ENCODE measurements at regions of chr14 and their contacts with region 1.

Region 1: GRCh38 chr14:60266021-60266937 is 17.3 kb downstream of the PPM1A start:
- DNase-seq: peak; percentile 24
- ATAC-seq: peak; percentile 72
- H3K4me3 Mint-ChIP-seq: no peak overlapping the region
- H3K27ac Mint-ChIP-seq: no peak overlapping the region
- H3K4me1 Mint-ChIP-seq: peaks cover 37% of the 10 kb centered on the region
- H3K27me3 Mint-ChIP-seq: no peaks in the 10 kb centered on the region
- CTCF ChIP-seq: peak; percentile 42

Region 2: GRCh38 chr14:60248697-60249318 is 17.5 kb before region 1 on chr14 and contains the start of gene PPM1A:
- CTCF ChIA-PET with region 1: interaction called, 36 read pairs
- POLR2A ChIA-PET with region 1: interaction called, 6 read pairs
- DNase-seq: peak; percentile 94
- ATAC-seq: peak; percentile 67
- H3K4me3 Mint-ChIP-seq: peak within 1 kb of the TSS; percentile 95
- H3K27ac Mint-ChIP-seq: peak within 1 kb of the TSS; percentile 100
- H3K4me1 Mint-ChIP-seq: peaks cover 64% of the 10 kb centered on the region
- H3K27me3 Mint-ChIP-seq: no peaks in the 10 kb centered on the region
- CTCF ChIP-seq: no peak
- total RNA-seq, gene PPM1A: 38.2 to 52.5 TPM (median 41.2 TPM) in 3 replicates

Region 3: DNA sequence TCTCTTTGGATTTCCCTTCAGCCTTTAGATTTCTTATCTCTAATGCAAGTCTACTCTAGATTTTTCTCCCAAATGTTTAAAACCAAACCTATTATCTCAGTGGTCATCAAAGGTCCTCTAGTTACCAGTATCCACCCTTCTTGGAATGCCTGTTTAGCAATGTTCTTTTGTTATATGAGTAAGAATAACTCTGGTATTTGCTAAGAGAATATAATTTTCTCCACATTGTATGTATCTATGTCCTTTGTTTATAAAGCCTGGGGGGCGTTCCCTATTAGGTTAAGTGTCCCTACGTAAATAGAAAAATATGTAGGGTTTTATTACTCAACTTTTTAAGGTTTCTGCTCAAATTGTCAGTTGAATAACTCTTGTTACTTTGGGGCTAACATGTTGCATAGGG is 10.1 kb after region 1 on chr14:
- CTCF ChIA-PET with region 1: interaction called, 19 read pairs
- POLR2A ChIA-PET with region 1: interaction called, 3 read pairs
- DNase-seq: no peak
- ATAC-seq: no peak
- H3K4me3 Mint-ChIP-seq: no peak overlapping the region
- H3K27ac Mint-ChIP-seq: peak overlapping the region; percentile 48
- H3K4me1 Mint-ChIP-seq: peaks cover 88% of the 10 kb centered on the region
- H3K27me3 Mint-ChIP-seq: no peaks in the 10 kb centered on the region
- CTCF ChIP-seq: no peak

Region 4: DNA sequence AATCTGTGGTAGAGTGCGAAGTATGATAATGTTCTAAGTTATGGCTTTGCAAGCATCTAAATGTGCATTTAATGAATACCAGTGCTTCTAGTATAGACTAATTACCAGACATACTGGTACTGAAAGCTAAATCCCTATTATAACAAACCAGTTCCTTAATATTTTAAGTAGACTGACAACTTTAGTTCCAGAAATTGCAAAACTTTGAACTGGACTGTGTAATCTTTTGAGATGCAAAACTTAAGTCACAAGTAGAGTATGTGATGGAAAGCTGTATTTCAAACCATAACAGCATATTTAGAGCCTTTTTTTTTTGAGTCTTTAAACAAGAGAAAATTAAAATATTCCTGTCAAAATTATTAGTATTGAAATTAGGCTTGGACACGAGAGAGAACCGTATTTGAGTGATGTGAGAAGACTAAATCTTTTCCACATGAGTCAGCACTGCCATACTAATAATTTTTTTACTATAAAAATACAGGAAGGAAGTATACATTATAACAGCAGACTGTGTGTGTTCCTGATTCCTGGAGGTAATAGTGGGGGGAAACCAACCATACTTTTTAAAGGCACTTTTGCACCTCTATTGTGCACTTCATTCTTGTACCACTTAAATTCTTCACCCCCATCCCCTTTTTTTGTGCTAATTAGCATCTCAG is 28.3 kb after region 1 on chr14:
- CTCF ChIA-PET with region 1: interaction called, 10 read pairs
- POLR2A ChIA-PET with region 1: no interaction called
- DNase-seq: no peak
- ATAC-seq: no peak
- H3K4me3 Mint-ChIP-seq: no peak overlapping the region
- H3K27ac Mint-ChIP-seq: no peak overlapping the region
- H3K4me1 Mint-ChIP-seq: peaks cover 37% of the 10 kb centered on the region
- H3K27me3 Mint-ChIP-seq: no peaks in the 10 kb centered on the region
- CTCF ChIP-seq: no peak

Region 5: GRCh38 chr14:60323199-60323896 is 57.1 kb after region 1 on chr14:
- CTCF ChIA-PET with region 1: interaction called, 64 read pairs
- POLR2A ChIA-PET with region 1: no interaction called
- DNase-seq: no peak
- ATAC-seq: peak; percentile 59
- H3K4me3 Mint-ChIP-seq: no peak overlapping the region
- H3K27ac Mint-ChIP-seq: no peak overlapping the region
- H3K4me1 Mint-ChIP-seq: peaks cover 49% of the 10 kb centered on the region
- H3K27me3 Mint-ChIP-seq: no peaks in the 10 kb centered on the region; the same call in none of the 2 replicates
- CTCF ChIP-seq: no peak

Region 6: GRCh38 chr14:60349663-60350365 is 83.5 kb after region 1 on chr14:
- CTCF ChIA-PET with region 1: interaction called, 16 read pairs
- POLR2A ChIA-PET with region 1: no interaction called
- DNase-seq: peak; percentile 22
- ATAC-seq: peak; percentile 79
- H3K4me3 Mint-ChIP-seq: peak overlapping the region; percentile 44
- H3K27ac Mint-ChIP-seq: no peak overlapping the region
- H3K4me1 Mint-ChIP-seq: peaks cover 58% of the 10 kb centered on the region
- H3K27me3 Mint-ChIP-seq: no peaks in the 10 kb centered on the region; the same call in 1 of the 2 replicates
- CTCF ChIP-seq: peak; percentile 75

Region 7: DNA sequence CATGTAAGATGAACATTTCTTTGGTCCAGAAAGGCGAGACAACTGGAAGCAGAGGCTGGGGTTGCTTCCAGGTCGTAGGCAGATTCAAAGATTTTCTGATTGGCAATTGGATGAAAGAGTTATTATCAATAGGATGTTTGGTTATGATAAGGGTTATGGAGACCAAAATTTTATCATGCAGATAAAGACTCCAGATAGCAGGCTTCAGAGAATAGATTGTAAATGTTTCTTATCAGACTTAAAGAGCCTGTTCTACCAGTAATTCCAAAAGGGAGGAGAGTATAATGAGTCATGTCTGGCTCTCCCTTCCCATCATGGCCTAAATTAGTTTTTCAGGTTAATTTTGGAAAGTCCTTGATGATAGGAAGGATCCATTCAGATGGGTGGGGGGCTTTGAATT is 164.0 kb after region 1 on chr14:
- CTCF ChIA-PET with region 1: no interaction called
- POLR2A ChIA-PET with region 1: no interaction called
- DNase-seq: no peak
- ATAC-seq: no peak
- H3K4me3 Mint-ChIP-seq: no peak overlapping the region
- H3K27ac Mint-ChIP-seq: no peak overlapping the region
- H3K4me1 Mint-ChIP-seq: no peaks in the 10 kb centered on the region
- H3K27me3 Mint-ChIP-seq: peaks cover 4% of the 10 kb centered on the region; the same call in 1 of the 2 replicates
- CTCF ChIP-seq: no peak